ENCODE measurements at regions of chr4 and their contacts with region 1.

Region 1: DNA sequence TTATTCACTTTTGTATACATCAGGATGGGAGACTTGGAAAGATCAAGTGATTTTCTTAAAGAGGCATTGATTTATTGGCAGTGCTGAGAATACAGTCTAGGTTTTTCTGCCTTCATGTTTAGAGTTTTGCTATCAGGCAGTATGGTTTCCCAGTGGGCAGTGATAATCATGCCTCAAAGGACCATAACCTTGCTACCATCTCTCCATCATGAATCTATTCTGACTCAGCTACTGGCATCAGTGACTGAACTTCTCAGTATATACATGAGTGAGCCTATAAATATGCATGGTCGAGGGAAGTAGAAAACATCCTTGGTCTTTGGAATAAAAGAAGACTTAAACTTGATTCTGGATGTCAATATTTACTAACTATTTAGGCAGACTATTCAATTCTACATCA is 562.0 kb upstream of the AADAT start:
- DNase-seq: no peak
- H3K4me3 ChIP-seq: no peak overlapping the region
- H3K27ac ChIP-seq: no peak overlapping the region
- H3K4me1 ChIP-seq: no peaks in the 10 kb centered on the region
- H3K27me3 ChIP-seq: no peaks in the 10 kb centered on the region
- CTCF ChIP-seq: no peak
- POLR2A ChIP-seq: no peak

Region 2: DNA sequence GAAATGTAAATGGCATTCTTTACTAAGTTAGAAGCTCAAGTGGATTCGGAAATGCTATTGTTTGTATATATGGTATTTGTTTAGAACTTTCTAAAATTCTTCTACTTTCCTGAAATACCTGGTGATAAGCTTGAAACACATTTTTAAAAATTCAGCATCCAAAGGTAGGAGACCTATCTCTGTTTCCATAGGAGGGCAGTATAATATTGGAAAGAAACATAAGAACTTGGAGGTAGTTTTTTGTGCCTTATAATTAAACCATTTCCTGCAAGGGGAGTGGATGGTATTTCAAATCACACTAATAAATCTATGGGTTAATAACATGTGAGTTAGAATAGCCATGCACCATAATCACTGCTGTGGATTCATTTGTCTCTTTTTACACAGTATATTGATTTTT is 344.6 kb before region 1 on chr4:
- intact Hi-C with region 1: loop called (anchors 5 kb)
- DNase-seq: no peak
- H3K4me3 ChIP-seq: no peak overlapping the region
- H3K27ac ChIP-seq: no peak overlapping the region
- H3K4me1 ChIP-seq: no peaks in the 10 kb centered on the region
- H3K27me3 ChIP-seq: no peaks in the 10 kb centered on the region
- CTCF ChIP-seq: no peak
- POLR2A ChIP-seq: no peak

Region 3: DNA sequence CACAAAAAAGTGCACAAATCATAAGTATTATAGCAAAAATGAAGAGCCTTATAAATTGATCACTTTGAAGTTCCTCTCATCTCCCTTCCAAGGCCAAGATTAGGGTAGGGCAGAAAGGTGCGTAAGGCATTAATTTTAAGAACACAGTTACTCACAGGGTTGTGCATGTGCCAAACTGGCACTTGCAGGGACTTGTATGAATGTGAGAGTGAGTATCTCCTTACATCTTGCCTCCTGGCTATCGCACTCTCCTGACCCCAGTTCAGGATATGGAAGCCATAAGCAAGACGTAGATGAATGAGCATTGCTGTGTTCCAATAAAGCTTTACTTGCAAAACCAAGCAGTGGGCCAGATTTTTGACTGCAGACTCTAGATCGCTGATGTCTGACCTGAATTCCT is 51.9 kb before region 1 on chr4:
- intact Hi-C with region 1: no loop called
- DNase-seq: no peak
- H3K4me3 ChIP-seq: no peak overlapping the region
- H3K27ac ChIP-seq: no peak overlapping the region
- H3K4me1 ChIP-seq: no peaks in the 10 kb centered on the region
- H3K27me3 ChIP-seq: no peaks in the 10 kb centered on the region
- CTCF ChIP-seq: no peak
- POLR2A ChIP-seq: no peak

Region 4: GRCh38 chr4:170610434-170610833 is 41.4 kb before region 1 on chr4:
- intact Hi-C with region 1: no loop called
- DNase-seq: no peak
- H3K4me3 ChIP-seq: no peak overlapping the region
- H3K27ac ChIP-seq: no peak overlapping the region
- H3K4me1 ChIP-seq: no peaks in the 10 kb centered on the region
- H3K27me3 ChIP-seq: no peaks in the 10 kb centered on the region
- CTCF ChIP-seq: no peak
- POLR2A ChIP-seq: no peak

Region 5: DNA sequence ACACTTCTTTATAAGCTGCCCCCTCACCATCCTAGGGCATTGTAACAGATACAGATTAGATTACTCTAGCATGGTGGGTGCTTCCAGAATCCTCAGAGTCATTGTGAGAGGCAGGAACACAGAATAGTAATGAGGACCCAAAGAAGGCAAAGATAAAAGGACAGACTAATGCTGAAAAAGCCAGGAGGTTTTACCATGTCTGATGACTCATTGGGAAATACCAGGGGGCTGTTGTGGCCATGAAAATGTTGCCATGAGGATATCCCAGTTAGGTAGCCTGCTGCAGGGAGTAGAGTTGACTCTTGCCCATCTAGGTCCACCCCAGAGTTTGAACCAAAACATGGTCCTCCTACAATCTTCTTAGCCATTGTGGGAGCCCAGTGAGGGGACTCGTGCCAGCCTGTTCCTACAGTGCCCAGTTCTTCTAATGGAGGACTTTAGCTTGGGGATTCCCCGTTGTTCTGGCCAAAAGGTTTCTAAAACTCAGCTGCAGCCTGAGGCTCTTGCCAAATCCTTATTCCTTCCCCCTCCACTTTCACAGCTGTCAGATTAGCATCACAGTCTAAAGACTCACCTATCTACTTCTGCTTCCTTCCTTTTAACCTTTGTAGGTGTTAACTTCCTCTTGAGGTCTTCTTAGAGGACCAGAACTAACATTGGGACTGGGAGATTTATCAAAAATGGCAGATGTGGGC is 23.9 kb after region 1 on chr4:
- intact Hi-C with region 1: no loop called
- DNase-seq: no peak
- H3K4me3 ChIP-seq: no peak overlapping the region
- H3K27ac ChIP-seq: no peak overlapping the region
- H3K4me1 ChIP-seq: no peaks in the 10 kb centered on the region
- H3K27me3 ChIP-seq: no peaks in the 10 kb centered on the region
- CTCF ChIP-seq: no peak
- POLR2A ChIP-seq: no peak